ENCODE measurements at regions of chr19 and their contacts with region 1.

Region 1: GRCh38 chr19:30686176-30686820 is 314.1 kb downstream of the ZNF536 start:
- DNase-seq: no peak
- ATAC-seq: no peak

Region 2: DNA sequence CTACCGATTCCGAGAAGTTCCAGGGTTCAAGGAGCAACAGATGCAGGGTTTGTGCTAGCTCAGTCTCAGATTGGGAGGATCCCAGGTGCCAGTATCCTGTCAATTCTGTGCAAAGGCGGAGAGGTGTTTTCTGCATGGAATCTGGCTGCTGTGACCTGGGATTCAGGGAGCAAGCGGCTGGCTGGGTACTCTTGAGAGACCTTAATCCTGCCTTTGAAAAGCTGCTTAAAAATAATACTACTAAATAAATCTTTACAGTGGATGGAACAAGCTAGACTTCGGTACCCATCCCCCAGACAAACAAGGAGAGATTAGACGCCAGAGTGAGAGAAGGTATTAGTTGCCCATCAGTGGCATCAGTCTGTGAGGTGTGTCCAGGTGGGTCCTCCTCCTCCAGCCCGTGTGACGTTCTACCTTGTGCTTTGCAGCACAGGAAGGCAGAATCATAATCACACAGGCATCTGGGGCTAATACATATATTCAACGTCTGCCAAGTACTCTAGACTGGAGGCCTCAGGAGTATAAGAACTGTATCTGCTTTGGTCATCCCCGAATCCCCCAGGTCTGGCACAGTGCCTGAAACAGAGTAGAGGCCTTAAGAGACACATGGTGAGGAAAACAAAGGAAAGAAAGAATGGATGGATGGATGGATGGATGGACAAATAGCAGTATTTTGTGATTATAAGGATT is 83.5 kb before region 1 on chr19:
- intact Hi-C with region 1: no loop called
- DNase-seq: no peak
- ATAC-seq: no peak

Region 3: DNA sequence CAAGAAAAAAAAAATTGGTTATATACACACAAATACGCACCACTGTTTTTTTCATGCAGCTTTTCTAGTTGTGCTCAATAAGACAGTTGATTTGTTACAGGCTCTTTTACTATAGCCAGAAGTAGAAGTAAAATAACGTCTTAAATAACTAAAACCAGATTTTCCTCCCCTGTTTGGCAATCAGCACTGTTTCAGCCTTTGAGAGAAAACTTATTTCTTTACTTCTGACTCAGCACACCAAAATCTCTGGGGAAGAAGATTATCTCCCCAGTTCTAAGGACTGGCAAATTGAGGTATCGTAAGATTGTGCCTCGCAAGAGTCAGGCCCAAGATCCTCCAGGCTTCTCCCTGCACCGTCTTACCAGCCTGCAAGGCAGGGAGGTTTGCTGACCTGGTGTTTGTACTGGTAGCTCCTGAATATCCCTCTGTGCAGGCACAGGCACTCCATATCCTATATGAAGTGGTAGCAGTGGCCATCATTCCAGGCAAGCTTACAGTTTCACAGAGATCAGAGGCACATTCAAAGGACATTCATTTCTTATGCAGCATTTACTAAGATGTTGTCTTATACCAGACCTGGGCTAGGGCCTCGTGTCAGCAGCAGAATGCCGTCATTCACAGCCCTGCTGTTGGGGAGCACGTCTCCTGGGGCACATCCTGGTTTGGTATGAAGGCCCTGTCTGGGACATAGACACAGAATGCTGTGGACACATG is 45.9 kb before region 1 on chr19:
- intact Hi-C with region 1: no loop called
- DNase-seq: no peak
- ATAC-seq: no peak

Region 4: GRCh38 chr19:30757837-30758617 is 71.7 kb after region 1 on chr19:
- intact Hi-C with region 1: no loop called
- DNase-seq: no peak
- ATAC-seq: no peak

Region 5: DNA sequence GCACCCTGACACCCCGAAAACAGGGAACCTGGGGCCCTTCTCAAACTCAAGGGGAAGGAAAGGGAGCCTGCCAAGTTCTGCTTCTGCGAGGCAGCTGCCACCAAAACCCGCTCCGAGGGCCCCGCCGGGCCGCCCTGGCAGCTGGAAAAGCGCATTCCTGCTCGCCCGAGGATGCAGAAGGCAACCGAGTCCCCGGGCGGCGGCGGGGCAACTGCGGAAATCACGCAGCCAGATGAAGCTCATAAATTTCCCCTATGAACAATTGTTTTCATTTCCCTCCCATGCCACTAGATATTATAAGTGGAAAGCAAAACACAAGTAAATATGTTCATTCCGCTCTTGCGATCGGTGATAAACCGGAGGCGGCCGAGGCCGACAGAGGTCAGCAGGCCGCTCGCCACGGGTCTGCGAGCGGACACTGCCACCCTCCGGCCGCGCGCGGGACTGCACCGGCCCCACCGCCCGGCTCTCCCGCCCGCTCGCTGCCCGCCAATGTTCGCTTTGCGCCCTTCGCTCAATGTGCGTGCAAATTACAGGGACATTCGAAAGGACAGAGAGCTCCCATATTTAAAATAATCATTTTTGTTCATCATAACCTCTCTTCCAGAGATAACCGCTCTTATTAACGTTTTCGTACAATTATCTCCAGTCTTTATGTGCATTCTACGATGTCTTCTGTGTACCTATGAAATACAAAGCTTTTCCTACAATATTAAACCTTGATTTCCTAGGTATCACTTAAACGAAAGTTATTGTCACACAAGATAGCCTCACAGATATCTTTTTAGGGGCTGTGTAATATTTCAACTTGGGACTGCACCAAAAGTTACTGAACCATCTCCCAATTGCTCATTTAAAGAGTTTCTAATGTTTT is 1538.3 kb after region 1 on chr19:
- intact Hi-C with region 1: loop called in 1 of 2 experiments (anchors 5 kb)
- DNase-seq: peak in 1 of 2 donors; percentile 62
- ATAC-seq: peak; percentile 88